ENCODE measurements at regions of chr10 and their contacts with region 1.

Region 1: GRCh38 chr10:97210543-97210961 is 24.8 kb upstream of the SLIT1 start:
- DNase-seq: peak; percentile 54
- ATAC-seq: peak; percentile 91
- H3K4me3 ChIP-seq: no peak overlapping the region
- H3K27ac ChIP-seq: no peak overlapping the region
- H3K4me1 ChIP-seq: no peaks in the 10 kb centered on the region
- H3K27me3 ChIP-seq: 0 out of 2 replicates have a peak, but pooled peaks cover 5% of the 10 kb centered on the region
- CTCF ChIP-seq: peak; percentile 87 to 98 (median 93)
- POLR2A ChIP-seq: no peak
- RAD21 ChIP-seq: peak; percentile 82

Region 2: GRCh38 chr10:96984541-96985131 is 225.9 kb before region 1 on chr10:
- CTCF ChIA-PET with region 1: no interaction called
- POLR2A ChIA-PET with region 1: no interaction called
- RAD21 ChIA-PET with region 1: no interaction called
- intact Hi-C with region 1: no loop called
- DNase-seq: no peak
- ATAC-seq: no peak
- H3K4me3 ChIP-seq: no peak overlapping the region
- H3K27ac ChIP-seq: no peak overlapping the region
- H3K4me1 ChIP-seq: no peaks in the 10 kb centered on the region
- H3K27me3 ChIP-seq: no peaks in the 10 kb centered on the region
- CTCF ChIP-seq: no peak
- POLR2A ChIP-seq: no peak
- RAD21 ChIP-seq: no peak

Region 3: GRCh38 chr10:97037365-97038361 is 172.9 kb before region 1 on chr10:
- CTCF ChIA-PET with region 1: interaction called, 13 read pairs
- POLR2A ChIA-PET with region 1: no interaction called
- RAD21 ChIA-PET with region 1: no interaction called
- intact Hi-C with region 1: loop called (anchors 1 kb)
- DNase-seq: peak; percentile 89
- ATAC-seq: peak; percentile 93
- H3K4me3 ChIP-seq: peak overlapping the region; percentile 38 to 55
- H3K27ac ChIP-seq: no peak overlapping the region
- H3K4me1 ChIP-seq: peaks cover 7 to 15% of the 10 kb centered on the region in 2 experiments; a peak in 3 of 4 replicates
- H3K27me3 ChIP-seq: no peaks in the 10 kb centered on the region
- CTCF ChIP-seq: peak; percentile 82 to 96 (median 87)
- POLR2A ChIP-seq: no peak
- RAD21 ChIP-seq: peak; percentile 89

Region 4: DNA sequence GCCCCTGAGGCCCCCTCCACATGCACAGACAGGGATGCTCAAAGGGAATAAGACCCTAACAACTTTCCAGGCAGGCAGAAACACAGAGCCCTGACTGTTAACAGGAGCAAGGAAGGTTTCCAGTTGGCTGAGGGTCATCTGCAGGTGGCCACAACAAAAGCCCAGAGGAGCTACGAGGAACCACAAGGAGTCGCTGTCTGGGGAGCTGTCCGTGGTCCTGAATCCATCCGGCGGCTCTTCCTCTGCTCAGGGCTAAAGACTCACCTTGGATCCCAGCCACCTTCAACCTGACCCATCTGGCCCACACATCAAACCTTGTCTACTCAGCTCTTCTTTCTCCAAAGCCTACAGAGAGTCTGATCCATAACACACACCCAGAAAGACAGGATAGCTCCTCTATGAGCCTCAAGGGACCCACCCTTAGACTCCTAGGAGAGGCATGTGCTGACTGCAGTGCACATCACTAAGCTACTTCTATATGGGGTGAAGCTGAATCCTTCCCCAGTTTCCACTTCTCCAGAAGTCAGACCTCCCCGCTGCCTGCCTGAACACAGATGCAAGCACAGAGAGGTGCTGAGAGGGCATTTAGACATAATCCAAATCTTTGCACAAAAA is 128.8 kb before region 1 on chr10:
- CTCF ChIA-PET with region 1: interaction called, 8 read pairs
- POLR2A ChIA-PET with region 1: no interaction called
- RAD21 ChIA-PET with region 1: no interaction called
- intact Hi-C with region 1: loop called (anchors 2 kb)
- DNase-seq: peak; percentile 34
- ATAC-seq: peak; percentile 90
- H3K4me3 ChIP-seq: no peak overlapping the region
- H3K27ac ChIP-seq: no peak overlapping the region
- H3K4me1 ChIP-seq: no peaks in the 10 kb centered on the region
- H3K27me3 ChIP-seq: peaks cover 52% of the 10 kb centered on the region
- CTCF ChIP-seq: peak; percentile 66 to 96 (median 95)
- POLR2A ChIP-seq: no peak
- RAD21 ChIP-seq: peak; percentile 52

Region 5: GRCh38 chr10:97138174-97138573 is 72.4 kb before region 1 on chr10:
- CTCF ChIA-PET with region 1: interaction called, 14 read pairs
- POLR2A ChIA-PET with region 1: no interaction called
- RAD21 ChIA-PET with region 1: interaction called in 1 of 2 experiments, 3 read pairs
- intact Hi-C with region 1: loop called (anchors 1 kb)
- DNase-seq: peak; percentile 31
- ATAC-seq: peak; percentile 99
- H3K4me3 ChIP-seq: no peak overlapping the region
- H3K27ac ChIP-seq: no peak overlapping the region
- H3K4me1 ChIP-seq: peaks cover 3 to 9% of the 10 kb centered on the region in 2 experiments; a peak in 1 of 4 replicates
- H3K27me3 ChIP-seq: peaks cover 6% of the 10 kb centered on the region; the same call in 1 of the 2 replicates
- CTCF ChIP-seq: peak; percentile 68 to 71 (median 70); a peak in 5 of 6 replicates
- POLR2A ChIP-seq: no peak
- RAD21 ChIP-seq: peak; percentile 67

Region 6: GRCh38 chr10:97196223-97197029 is 14.1 kb before region 1 on chr10:
- CTCF ChIA-PET with region 1: interaction called, 21 read pairs
- POLR2A ChIA-PET with region 1: no interaction called
- RAD21 ChIA-PET with region 1: no interaction called
- intact Hi-C with region 1: no loop called
- DNase-seq: peak; percentile 45
- ATAC-seq: peak; percentile 90
- H3K4me3 ChIP-seq: peak overlapping the region; percentile 29 to 58
- H3K27ac ChIP-seq: peak overlapping the region; percentile 21; the same call in 1 of the 2 replicates
- H3K4me1 ChIP-seq: peaks cover 3 to 6% of the 10 kb centered on the region in 2 experiments; a peak in 1 of 4 replicates
- H3K27me3 ChIP-seq: no peaks in the 10 kb centered on the region; the same call in 1 of the 2 replicates
- CTCF ChIP-seq: peak; percentile 65 to 87 (median 84); a peak in 5 of 6 replicates
- POLR2A ChIP-seq: no peak
- RAD21 ChIP-seq: peak; percentile 52; the same call in 1 of the 2 replicates

Region 7: DNA sequence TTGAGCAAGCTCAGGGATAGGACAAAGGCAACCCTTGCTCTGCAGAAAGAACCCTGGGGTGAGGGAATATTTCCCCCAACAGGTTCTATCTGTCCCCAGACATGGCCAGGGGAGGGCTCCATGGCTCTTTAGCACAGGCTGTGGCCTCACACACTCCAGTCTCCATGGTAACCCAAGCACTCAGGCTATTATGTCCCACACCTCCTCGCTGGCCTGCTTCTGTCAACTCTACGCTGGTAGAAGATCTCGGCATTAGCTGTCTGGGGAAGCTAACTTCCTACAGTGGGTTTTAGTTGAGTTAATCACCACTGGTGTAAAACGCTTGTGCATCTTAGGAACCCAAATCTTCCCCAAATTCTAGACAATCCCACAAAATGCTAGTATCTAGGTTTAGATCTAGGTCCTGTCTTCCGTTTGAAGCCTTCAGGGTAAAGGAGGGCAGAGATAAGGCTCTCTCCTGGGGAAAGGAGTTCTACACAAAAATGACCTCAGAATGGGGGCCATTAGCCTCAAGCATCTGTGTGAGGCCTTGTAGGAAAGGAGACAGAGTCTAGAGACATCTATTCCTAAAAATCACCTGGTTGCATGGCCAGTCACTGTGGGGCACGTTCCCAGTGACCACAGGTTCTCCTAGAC is 11.9 kb after region 1 on chr10:
- CTCF ChIA-PET with region 1: interaction called, 19 read pairs
- POLR2A ChIA-PET with region 1: interaction called, 3 read pairs
- RAD21 ChIA-PET with region 1: no interaction called
- intact Hi-C with region 1: no loop called
- DNase-seq: no peak
- ATAC-seq: no peak
- H3K4me3 ChIP-seq: no peak overlapping the region
- H3K27ac ChIP-seq: no peak overlapping the region
- H3K4me1 ChIP-seq: no peaks in the 10 kb centered on the region
- H3K27me3 ChIP-seq: no peaks in the 10 kb centered on the region
- CTCF ChIP-seq: no peak
- POLR2A ChIP-seq: no peak
- RAD21 ChIP-seq: no peak